Kidney (tissue), 22 donors: ENCODE measurements at regions of chr9 and their contacts with region 1.

Region 1: DNA sequence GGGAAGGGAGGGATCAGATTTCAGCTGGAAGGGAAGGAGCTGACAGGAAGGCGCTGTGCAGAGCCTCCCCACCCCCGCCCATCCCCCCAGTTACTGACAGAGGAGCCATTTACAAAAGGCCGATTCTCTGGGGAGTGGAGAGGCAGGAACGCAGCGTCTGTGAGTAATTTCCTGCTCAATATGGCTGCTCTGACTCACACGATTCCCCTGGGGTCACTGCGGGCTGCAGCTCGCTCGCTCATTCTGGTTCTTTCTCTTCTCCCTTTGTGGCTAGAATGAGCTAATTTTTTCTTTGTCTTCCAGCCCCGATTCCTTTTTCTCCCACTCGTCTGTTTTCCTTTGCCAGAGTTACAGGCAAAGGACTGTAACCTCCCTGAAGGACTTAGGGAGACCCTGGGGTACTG is 28.8 kb downstream of the PTPA start:
- DNase-seq: peak; percentile 95 to 99 (median 97)
- H3K4me3 ChIP-seq: peak overlapping the region; percentile 42 to 65 (median 59)
- H3K27ac ChIP-seq: peak overlapping the region; percentile 99 to 100
- H3K4me1 ChIP-seq: peaks cover 11 to 61% (median 59%) of the 10 kb centered on the region in 3 donors
- H3K27me3 ChIP-seq: no peaks in the 10 kb centered on the region
- CTCF ChIP-seq: no peak

Region 2: DNA sequence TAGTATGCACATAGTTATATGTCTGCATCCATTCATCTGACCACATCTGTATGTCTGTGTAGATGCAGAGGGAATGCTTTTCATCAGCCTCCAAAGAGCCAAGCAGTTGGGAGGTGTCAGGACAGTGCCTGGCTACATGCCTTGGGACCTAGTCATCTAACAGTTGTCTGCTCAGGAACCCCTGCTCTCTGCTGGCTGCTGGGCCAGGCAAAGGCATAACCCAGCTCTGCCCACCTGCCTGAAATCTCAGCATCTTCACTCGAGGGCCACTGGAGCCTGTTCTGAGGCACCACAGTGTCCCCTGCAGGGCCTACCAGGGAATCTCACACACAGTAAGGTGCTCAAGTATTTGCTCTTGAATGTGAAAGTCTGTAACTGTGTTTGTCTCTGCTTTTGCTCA is 477.2 kb after region 1 on chr9:
- intact Hi-C with region 1: loop called (anchors 5 kb)
- DNase-seq: peak in 2 of 5 donors; percentile 33 to 50
- H3K4me3 ChIP-seq: no peak overlapping the region
- H3K27ac ChIP-seq: no peak overlapping the region
- H3K4me1 ChIP-seq: peaks cover 0 to 14% (median 4%) of the 10 kb centered on the region in 3 donors
- H3K27me3 ChIP-seq: no peaks in the 10 kb centered on the region
- CTCF ChIP-seq: peak; percentile 30